ENCODE measurements at regions of chrX and their contacts with region 1.

Region 1: DNA sequence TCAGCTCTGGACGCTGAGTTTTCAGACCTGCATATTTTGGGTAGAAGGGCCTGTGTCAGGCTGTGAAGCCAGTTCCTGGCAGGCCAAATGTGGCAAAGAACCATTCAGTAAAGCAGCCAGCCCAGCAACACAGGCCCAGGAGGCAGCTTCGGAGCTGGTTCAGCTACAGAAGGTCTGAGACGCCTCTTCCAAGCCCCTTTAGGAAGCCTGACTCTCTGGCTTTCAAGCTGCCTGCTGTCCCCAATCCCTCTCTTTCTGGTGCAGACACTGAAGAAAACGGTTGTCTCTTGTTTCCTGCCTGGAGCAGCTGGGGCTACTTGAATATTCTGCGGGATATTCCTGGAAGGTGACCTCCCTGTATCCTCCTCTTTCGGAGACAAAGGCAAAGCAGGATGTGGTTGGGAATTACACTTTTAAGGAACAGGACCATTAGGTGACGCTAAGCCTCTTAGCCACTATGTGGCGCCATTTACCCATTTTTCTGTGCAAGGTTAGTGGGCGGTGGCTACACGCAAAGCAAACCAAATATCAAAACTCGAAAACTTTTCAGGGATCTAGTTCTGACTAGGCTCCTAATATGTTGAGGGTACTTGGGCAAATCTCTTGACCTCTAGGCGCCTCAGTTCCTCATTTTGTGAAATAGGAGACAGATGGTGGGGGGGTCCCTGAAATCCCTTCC is 47.2 kb upstream of the LAS1L start:
- DNase-seq: peak in 4 of 5 donors; percentile 55 to 83 (median 68)
- H3K4me3 ChIP-seq: no peak overlapping the region
- H3K27ac ChIP-seq: no peak overlapping the region
- H3K4me1 ChIP-seq: no peaks in the 10 kb centered on the region
- H3K27me3 ChIP-seq: no peaks in the 10 kb centered on the region
- CTCF ChIP-seq: peak; percentile 76

Region 2: DNA sequence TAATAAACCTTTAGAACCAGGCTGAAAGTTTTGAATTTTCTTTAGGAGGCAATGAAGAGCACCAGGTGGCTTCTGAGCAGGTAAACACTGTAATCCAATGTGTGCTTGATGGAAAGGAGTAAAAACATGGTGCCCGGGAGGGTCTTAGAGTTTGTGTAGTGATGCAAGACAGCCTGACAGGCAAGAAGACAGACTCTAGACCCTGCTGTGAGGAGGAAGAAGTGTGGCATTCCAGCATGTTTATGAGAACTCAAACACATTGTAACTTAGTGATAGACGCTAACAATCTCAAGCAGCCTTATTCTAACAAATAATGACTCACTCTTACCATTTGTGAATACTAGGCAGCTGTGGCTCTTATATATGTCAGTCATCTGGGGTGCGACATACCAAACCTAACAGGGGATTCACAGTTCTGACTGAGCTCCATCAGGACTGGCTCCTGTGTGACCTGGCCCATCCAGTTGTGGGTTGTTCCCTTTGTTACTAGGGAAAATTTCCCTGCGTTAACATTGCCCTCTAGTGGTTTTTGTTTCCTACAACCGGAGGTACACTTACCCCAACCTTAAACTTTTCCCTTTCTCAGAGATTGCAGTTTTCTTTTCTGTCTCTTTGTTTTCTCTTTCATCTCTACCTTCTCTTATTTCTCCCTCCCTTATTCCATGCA is 404.3 kb after region 1 on chrX:
- intact Hi-C with region 1: loop called (anchors 10 kb)
- DNase-seq: peak in 4 of 5 donors; percentile 15 to 66 (median 42)
- H3K4me3 ChIP-seq: no peak overlapping the region
- H3K27ac ChIP-seq: no peak overlapping the region
- H3K4me1 ChIP-seq: no peaks in the 10 kb centered on the region
- H3K27me3 ChIP-seq: no peaks in the 10 kb centered on the region
- CTCF ChIP-seq: peak; percentile 41

Measured in kidney (tissue), 22 donors.